ENCODE measurements at regions of chr22 and their contacts with region 1.

Region 1: DNA sequence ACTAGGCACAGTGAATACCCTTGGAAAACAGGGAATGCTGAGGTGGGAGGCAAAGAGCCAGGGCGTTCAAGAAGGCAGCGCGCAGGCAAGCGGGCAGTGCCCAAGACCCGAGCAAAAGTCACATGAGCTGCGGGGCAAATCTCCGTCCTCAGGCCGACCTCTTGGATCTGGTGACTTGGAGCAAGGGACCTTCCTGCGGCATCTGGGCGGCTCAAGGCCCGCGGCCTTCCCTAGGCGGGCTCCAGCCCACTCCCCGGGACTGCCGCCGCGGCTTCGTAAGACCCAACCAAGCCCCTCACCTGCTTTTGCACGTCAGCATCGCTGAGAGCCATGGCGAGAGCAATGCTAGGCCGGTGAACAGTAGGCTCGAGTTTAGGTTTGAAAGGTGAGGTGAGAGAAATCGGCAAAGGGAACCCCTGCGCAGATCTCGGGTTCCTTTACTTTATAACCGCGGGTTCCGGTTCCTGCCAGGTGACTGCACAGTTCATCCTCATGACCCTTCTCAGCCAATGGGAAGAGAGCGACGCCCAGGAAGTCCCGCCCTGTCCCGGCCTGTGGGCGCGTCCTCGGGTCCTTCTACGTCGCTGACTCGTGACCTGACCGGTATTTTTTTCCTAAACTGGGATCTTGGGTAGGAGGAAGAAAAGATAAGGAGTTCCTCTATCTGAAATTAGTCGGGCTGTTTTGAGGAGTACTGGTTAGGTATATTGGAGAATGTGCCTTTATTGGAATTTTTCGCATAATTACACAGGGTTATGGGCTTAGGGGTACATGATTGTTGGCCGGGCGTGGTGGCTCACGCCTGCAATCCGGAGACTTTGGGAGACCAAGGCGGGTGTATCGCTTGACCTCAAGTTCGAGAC is at the start of gene ATP6V1E1:
- DNase-seq: peak; percentile 95
- H3K4me3 ChIP-seq: peak within 1 kb of the TSS; percentile 98
- H3K27ac ChIP-seq: peak within 1 kb of the TSS; percentile 57
- H3K4me1 ChIP-seq: peaks cover 16% of the 10 kb centered on the region
- CTCF ChIP-seq: no peak
- total RNA-seq, gene ATP6V1E1: 82.2 and 86.5 TPM in 2 replicates

Region 2: GRCh38 chr22:17492247-17492646 is 136.3 kb before region 1 on chr22:
- CTCF ChIA-PET with region 1: no interaction called
- POLR2A ChIA-PET with region 1: no interaction called
- intact Hi-C with region 1: no loop called
- DNase-seq: no peak
- H3K4me3 ChIP-seq: no peak overlapping the region
- H3K27ac ChIP-seq: no peak overlapping the region
- H3K4me1 ChIP-seq: peaks cover 6% of the 10 kb centered on the region
- CTCF ChIP-seq: no peak

Region 3: DNA sequence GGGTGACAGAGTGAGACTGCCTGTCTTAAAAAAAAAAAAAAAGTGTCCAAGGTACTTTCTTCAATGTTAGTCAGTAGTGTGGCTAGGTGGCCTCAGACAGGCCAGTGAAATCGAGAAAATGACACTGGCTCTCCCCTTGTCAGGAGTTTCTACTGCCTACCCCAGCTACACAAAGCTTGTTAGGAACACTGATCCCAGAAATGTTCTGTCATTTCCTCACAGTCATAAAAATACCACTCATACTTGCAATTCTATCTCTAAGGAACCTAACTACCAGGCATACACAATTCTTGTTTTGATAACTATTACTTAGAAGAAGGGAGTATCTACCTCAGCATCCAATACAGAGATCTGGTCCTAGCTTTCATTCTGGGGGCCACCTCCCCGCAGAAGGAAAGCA is 31.3 kb before region 1 on chr22:
- CTCF ChIA-PET with region 1: no interaction called
- POLR2A ChIA-PET with region 1: interaction called, 10 read pairs
- intact Hi-C with region 1: loop called (anchors 2 kb)
- DNase-seq: no peak
- H3K4me3 ChIP-seq: no peak overlapping the region
- H3K27ac ChIP-seq: no peak overlapping the region
- H3K4me1 ChIP-seq: peaks cover 36% of the 10 kb centered on the region
- CTCF ChIP-seq: no peak

Measured in OCI-LY7 (cell line).